Mammary epithelial cell (primary cell): ENCODE measurements at regions of chr15 and their contacts with region 1.

Region 1: DNA sequence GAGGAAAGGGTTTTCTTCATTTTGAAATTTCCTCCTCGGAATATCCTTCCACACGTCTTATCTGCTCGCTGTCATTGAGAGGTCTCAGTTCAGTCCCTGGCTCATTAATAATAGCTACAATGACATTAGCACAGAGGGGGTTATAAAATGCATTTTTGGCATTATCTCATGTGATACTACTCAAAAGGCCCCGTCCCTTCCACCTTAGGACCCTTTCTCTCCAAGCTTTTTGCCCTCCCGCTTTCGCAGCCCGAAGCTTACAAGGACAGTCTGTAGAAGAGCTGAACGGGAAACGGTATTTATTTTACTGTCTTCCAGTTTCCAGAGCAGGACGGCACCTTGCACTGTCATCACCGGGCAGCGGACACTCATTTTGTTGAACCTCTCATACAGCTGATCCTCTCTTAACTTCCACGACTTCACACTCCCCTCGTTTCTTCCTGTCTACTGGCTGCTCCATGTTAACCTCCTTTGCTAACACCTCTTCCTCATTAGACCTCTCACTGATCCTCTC is 5.6 kb upstream of the PLEKHO2 start:
- DNase-seq: no peak
- H3K4me3 ChIP-seq: no peak overlapping the region
- H3K27ac ChIP-seq: no peak overlapping the region
- H3K4me1 ChIP-seq: peaks cover 5% of the 10 kb centered on the region
- H3K27me3 ChIP-seq: no peaks in the 10 kb centered on the region
- CTCF ChIP-seq: no peak

Region 2: GRCh38 chr15:64697911-64698369 is 138.1 kb before region 1 on chr15:
- CTCF ChIA-PET with region 1: interaction called, 25 read pairs
- dilution Hi-C with region 1: no loop called
- in situ Hi-C with region 1: no loop called
- intact Hi-C with region 1: no loop called
- DNase-seq: peak; percentile 80
- H3K4me3 ChIP-seq: no peak overlapping the region
- H3K27ac ChIP-seq: peak overlapping the region; percentile 50
- H3K4me1 ChIP-seq: peaks cover 46% of the 10 kb centered on the region
- H3K27me3 ChIP-seq: no peaks in the 10 kb centered on the region
- CTCF ChIP-seq: no peak

Region 3: GRCh38 chr15:64740311-64741170 is 95.5 kb before region 1 on chr15:
- CTCF ChIA-PET with region 1: no interaction called
- dilution Hi-C with region 1: loop called (anchors 5 kb)
- in situ Hi-C with region 1: no loop called
- intact Hi-C with region 1: no loop called
- DNase-seq: peak; percentile 50
- H3K4me3 ChIP-seq: no peak overlapping the region
- H3K27ac ChIP-seq: no peak overlapping the region
- H3K4me1 ChIP-seq: no peaks in the 10 kb centered on the region
- H3K27me3 ChIP-seq: no peaks in the 10 kb centered on the region
- CTCF ChIP-seq: peak in 1 of 2 donors; percentile 31

Region 4: GRCh38 chr15:64775551-64776401 is 60.3 kb before region 1 on chr15 and contains the start of gene RBPMS2:
- CTCF ChIA-PET with region 1: no interaction called
- dilution Hi-C with region 1: no loop called
- in situ Hi-C with region 1: no loop called
- intact Hi-C with region 1: no loop called
- DNase-seq: no peak
- H3K4me3 ChIP-seq: peak within 1 kb of the TSS in 2 of 3 experiments; percentile 34 to 44
- H3K27ac ChIP-seq: no peak within 1 kb of the TSS
- H3K4me1 ChIP-seq: peaks cover 3% of the 10 kb centered on the region
- H3K27me3 ChIP-seq: peaks cover 24% of the 10 kb centered on the region
- CTCF ChIP-seq: no peak
- total RNA-seq, gene RBPMS2: not detected

Region 5: DNA sequence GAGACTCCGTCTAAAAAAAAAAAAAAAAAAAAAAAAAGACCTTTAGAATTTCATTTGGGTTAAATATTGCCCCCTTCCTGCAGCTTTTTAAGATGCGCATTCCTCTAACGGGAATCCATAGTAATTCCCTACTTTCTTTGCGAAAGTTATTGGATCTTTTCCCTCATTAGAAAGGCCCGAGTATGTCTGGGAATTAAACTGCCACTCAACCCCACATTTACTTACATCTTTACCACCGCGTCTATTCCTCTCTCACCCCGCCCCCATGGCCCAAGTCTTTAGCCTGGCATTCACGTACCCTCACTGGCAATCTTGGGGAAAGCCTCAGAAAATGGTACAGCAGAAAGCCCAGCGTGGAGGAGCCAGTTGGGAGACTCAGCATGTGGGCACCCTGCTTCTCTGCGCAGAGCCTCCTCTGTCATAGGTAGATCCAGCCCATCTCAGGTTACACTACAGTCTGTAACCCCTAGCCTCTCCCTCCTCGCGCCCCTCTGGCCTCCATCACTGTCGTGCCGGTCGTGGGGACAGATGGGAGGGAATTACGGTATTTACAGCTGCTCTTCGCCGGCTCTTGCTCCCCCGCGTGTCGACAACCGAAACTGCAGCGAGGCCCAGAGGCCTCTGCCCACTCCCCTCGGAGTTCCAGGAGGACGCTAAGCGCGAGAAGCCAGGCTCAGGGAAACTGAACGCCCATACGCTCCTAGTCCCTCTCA is 69.2 kb after region 1 on chr15:
- CTCF ChIA-PET with region 1: interaction called, 3 read pairs
- dilution Hi-C with region 1: no loop called
- in situ Hi-C with region 1: no loop called
- intact Hi-C with region 1: loop called (anchors 1 kb)
- DNase-seq: no peak
- H3K4me3 ChIP-seq: no peak overlapping the region
- H3K27ac ChIP-seq: no peak overlapping the region
- H3K4me1 ChIP-seq: no peaks in the 10 kb centered on the region
- H3K27me3 ChIP-seq: no peaks in the 10 kb centered on the region
- CTCF ChIP-seq: peak; percentile 59 to 68

Region 6: DNA sequence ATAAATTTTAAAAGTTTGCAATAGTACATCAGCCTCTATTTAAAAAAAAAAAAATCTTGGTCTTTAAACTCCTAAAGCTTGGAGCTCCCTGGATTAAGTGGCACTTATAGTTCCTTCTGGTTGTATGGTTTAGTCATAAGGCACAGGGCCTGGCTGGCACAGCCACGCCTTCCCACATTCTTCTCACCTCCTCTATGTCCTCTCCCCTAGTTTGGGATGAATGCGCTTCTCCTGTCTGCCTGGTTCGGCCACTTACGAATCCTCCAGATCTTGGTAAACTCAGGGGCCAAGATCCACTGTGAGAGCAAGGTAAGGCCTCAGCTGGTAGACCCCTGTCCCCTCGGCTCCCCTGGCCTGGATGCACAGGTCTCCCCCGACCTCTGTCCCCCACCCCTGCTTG is 85.6 kb after region 1 on chr15:
- CTCF ChIA-PET with region 1: no interaction called
- dilution Hi-C with region 1: loop called (anchors 5 kb)
- in situ Hi-C with region 1: no loop called
- intact Hi-C with region 1: no loop called
- DNase-seq: peak; percentile 9
- H3K4me3 ChIP-seq: no peak overlapping the region
- H3K27ac ChIP-seq: no peak overlapping the region
- H3K4me1 ChIP-seq: no peaks in the 10 kb centered on the region
- H3K27me3 ChIP-seq: no peaks in the 10 kb centered on the region
- CTCF ChIP-seq: no peak